Endothelial cell of umbilical vein (primary cell): ENCODE measurements at regions of chr3 and their contacts with region 1.

Region 1: DNA sequence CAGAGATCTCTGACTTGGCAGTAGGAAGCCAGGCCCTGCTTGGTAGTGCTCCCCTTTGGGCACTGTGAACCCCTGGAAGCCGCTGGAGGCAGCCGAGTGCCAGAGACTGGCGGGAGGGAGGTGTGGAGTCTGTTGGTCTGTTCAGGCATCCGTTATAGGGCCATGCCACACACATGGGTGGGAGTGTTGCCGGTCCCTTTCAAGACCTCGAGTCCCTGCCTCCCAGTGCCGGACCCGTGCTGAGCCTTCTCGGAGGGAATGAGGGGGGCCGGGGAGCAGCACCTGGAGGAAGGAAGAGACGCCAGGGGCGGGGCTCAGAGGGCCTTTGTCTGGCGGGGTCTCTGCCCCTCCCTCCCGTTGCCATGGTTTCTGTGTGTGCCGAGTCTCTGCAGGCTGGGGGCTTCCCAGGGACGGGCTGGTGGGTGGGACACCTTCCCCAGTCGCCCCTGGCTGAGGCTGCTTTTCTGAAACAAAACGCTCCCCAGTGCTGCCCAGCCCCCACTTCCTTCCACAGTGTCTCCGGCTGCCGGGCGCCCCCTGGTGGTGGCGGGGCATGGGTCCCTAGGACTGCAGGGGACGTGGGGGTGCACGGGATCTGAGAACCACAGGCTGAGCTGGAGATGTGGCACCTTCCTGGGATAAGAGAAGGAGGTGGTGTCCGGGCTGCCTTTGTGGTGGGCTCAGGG is 10.0 kb downstream of the GNAI2 start:
- DNase-seq: peak; percentile 90
- H3K4me3 ChIP-seq: no peak overlapping the region
- H3K27ac ChIP-seq: peak overlapping the region; percentile 86
- H3K4me1 ChIP-seq: peaks cover 92% of the 10 kb centered on the region
- H3K27me3 ChIP-seq: no peaks in the 10 kb centered on the region
- CTCF ChIP-seq: peak; percentile 98 to 99
- POLR2A ChIP-seq: peak; percentile 6

Region 2: GRCh38 chr3:49939858-49940666 is 305.9 kb before region 1 on chr3 and contains the start of gene RBM6:
- CTCF ChIA-PET with region 1: no interaction called
- POLR2A ChIA-PET with region 1: no interaction called
- dilution Hi-C with region 1: no loop called
- intact Hi-C with region 1: no loop called
- DNase-seq: peak; percentile 97
- H3K4me3 ChIP-seq: peak within 1 kb of the TSS; percentile 44 to 85 (median 84)
- H3K27ac ChIP-seq: peak within 1 kb of the TSS; percentile 64
- H3K4me1 ChIP-seq: peaks cover 5% of the 10 kb centered on the region
- H3K27me3 ChIP-seq: no peaks in the 10 kb centered on the region
- CTCF ChIP-seq: no peak
- POLR2A ChIP-seq: peak; percentile 98
- total RNA-seq, gene RBM6: 94.5 and 96.0 TPM in 2 replicates

Region 3: GRCh38 chr3:50184242-50184978 is 61.6 kb before region 1 on chr3:
- CTCF ChIA-PET with region 1: no interaction called
- POLR2A ChIA-PET with region 1: no interaction called
- dilution Hi-C with region 1: loop called (anchors 5 kb)
- intact Hi-C with region 1: no loop called
- DNase-seq: no peak
- H3K4me3 ChIP-seq: no peak overlapping the region
- H3K27ac ChIP-seq: no peak overlapping the region
- H3K4me1 ChIP-seq: no peaks in the 10 kb centered on the region
- H3K27me3 ChIP-seq: no peaks in the 10 kb centered on the region
- CTCF ChIP-seq: no peak
- POLR2A ChIP-seq: no peak

Region 4: GRCh38 chr3:50235716-50236496 is 10.1 kb before region 1 on chr3 and contains the start of gene GNAI2:
- CTCF ChIA-PET with region 1: interaction called, 134 read pairs
- POLR2A ChIA-PET with region 1: interaction called, 14 read pairs
- dilution Hi-C with region 1: no loop called
- intact Hi-C with region 1: loop called (anchors 1 kb)
- DNase-seq: peak; percentile 99
- H3K4me3 ChIP-seq: peak within 1 kb of the TSS; percentile 80 to 88 (median 81)
- H3K27ac ChIP-seq: peak within 1 kb of the TSS; percentile 60
- H3K4me1 ChIP-seq: peaks cover 27% of the 10 kb centered on the region
- H3K27me3 ChIP-seq: no peaks in the 10 kb centered on the region
- CTCF ChIP-seq: no peak
- POLR2A ChIP-seq: peak; percentile 98
- total RNA-seq, gene GNAI2: 767 and 773 TPM in 2 replicates

Region 5: DNA sequence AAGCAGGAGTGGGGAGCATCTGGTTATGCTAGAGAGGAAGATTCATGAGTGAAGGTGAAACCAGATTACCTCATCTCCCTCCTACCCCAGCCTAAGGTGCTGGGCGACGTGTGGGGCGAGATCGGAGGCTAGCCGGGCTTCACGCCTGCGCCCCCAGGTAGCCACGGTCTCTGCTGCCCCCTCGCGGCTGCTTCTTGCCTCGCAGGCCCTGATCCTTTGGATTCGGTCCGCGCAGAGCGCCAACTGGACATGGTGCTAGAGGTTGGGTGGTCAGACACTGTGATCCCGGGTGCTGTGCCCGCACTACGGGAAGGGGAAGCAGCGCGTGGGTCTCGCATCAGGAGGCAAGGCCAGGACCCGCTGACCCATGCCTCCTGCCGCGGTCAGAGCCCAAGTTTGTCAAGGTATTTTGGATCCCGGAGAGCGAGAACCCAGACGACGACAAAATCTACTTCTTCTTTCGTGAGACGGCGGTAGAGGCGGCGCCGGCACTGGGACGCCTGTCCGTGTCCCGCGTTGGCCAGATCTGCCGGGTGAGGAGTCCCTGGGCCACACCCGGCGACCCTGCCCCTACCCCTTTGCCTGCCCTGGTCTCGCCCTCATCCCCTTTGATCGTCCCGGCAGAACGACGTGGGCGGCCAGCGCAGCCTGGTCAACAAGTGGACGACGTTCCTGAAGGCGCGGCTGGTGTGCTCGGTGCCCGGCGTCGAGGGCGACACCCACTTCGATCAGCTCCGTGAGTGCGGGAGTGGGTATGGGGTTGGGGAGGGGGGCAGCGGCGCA is 27.1 kb after region 1 on chr3:
- CTCF ChIA-PET with region 1: interaction called, 6 read pairs
- POLR2A ChIA-PET with region 1: interaction called, 3 read pairs
- dilution Hi-C with region 1: no loop called
- intact Hi-C with region 1: loop called (anchors 1 kb)
- DNase-seq: peak; percentile 84
- H3K4me3 ChIP-seq: peak overlapping the region in 2 of 3 experiments; percentile 13 to 14
- H3K27ac ChIP-seq: no peak overlapping the region
- H3K4me1 ChIP-seq: peaks cover 2% of the 10 kb centered on the region
- H3K27me3 ChIP-seq: peaks cover 18 to 24% of the 10 kb centered on the region in 2 experiments
- CTCF ChIP-seq: peak; percentile 93 to 98
- POLR2A ChIP-seq: no peak

Region 6: GRCh38 chr3:50519471-50520089 is 273.6 kb after region 1 on chr3:
- CTCF ChIA-PET with region 1: no interaction called
- POLR2A ChIA-PET with region 1: interaction called, 12 read pairs
- dilution Hi-C with region 1: no loop called
- intact Hi-C with region 1: no loop called
- DNase-seq: peak; percentile 27
- H3K4me3 ChIP-seq: no peak overlapping the region
- H3K27ac ChIP-seq: no peak overlapping the region
- H3K4me1 ChIP-seq: peaks cover 5% of the 10 kb centered on the region
- H3K27me3 ChIP-seq: peaks cover 0 to under 1% of the 10 kb centered on the region in 2 experiments
- CTCF ChIP-seq: peak; percentile 76 to 88
- POLR2A ChIP-seq: no peak

Region 7: DNA sequence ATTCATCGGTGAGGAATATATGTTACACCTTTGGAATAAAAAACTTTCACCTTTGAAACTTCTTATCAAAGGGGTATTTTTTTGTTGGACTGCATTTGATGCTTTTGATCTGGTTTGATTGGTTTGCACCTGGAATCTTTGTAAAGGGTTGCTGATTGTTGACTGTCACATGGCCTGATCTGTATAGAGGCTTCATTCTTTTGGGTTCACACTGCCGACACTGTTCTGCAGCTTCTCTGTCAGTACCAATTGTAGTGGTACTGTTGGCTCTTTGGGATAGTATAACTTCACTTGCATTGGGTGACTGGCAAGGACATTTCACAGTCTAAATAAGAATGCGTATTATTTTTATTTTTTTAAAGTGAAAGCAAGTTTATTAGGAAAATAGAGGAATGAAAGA is 584.5 kb after region 1 on chr3:
- CTCF ChIA-PET with region 1: no interaction called
- POLR2A ChIA-PET with region 1: no interaction called
- dilution Hi-C with region 1: no loop called
- intact Hi-C with region 1: no loop called
- DNase-seq: no peak
- H3K4me3 ChIP-seq: no peak overlapping the region
- H3K27ac ChIP-seq: no peak overlapping the region
- H3K4me1 ChIP-seq: no peaks in the 10 kb centered on the region
- H3K27me3 ChIP-seq: no peaks in the 10 kb centered on the region
- CTCF ChIP-seq: no peak
- POLR2A ChIP-seq: no peak